HCT116 (cell line): ENCODE measurements at regions of chr13 and their contacts with region 1.

Region 1: DNA sequence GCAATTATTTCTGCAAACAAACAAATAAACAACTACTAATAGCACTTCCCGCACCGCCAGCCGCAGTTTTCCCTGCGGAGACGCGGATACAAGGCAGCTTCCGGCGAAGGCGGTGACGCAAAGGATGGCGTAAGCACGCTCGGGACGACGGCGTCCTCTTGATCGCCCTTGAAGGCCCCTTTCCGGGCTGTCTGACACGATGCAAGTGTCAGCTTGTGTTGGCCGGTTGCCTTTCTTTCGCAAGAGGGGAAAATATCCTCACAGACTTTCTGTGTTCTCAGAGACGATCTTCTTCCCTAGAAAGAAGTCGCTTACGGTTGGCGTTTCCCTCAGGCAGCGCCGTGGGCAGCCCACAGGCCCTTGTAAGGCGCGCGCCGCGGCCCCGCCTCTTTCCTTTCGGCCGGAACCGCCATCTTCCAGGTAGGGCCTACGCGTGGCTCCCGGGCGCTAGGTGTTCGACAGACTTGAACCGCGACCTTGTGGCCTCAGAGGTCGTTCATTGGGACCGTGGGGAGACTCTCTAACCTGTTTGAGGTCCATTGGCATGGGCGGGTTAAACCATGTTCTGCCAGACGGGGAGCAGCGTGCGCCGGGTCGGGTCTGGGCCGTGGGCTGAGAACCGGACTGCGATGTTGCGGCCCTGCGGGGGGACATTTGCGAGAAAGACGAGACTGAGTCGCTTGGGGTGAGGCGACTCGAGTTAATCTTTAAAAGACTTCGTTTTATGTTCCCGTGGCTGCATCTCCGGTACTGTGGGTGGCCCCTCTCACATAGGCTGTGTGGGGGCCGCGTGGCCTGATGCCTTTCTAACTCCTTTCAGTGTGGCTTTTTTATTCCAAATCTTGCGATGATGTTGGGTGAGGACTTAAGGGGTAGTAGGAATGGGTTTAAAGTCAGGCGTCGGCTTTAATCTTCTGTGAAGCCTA is at the start of gene RPL21:
- DNase-seq: peak; percentile 97
- ATAC-seq: peak; percentile 95
- H3K4me3 ChIP-seq: peak within 1 kb of the TSS; percentile 86 to 96
- H3K27ac ChIP-seq: peak within 1 kb of the TSS; percentile 96
- H3K4me1 ChIP-seq: peaks cover 13 to 22% of the 10 kb centered on the region in 2 experiments; a peak in 3 of 4 replicates
- H3K27me3 ChIP-seq: no peaks in the 10 kb centered on the region
- CTCF ChIP-seq: no peak
- POLR2A ChIP-seq: peak; percentile 88
- RAD21 ChIP-seq: peak; percentile 6; the same call in 1 of the 2 replicates
- total RNA-seq, gene RPL21: 915 TPM

Region 2: DNA sequence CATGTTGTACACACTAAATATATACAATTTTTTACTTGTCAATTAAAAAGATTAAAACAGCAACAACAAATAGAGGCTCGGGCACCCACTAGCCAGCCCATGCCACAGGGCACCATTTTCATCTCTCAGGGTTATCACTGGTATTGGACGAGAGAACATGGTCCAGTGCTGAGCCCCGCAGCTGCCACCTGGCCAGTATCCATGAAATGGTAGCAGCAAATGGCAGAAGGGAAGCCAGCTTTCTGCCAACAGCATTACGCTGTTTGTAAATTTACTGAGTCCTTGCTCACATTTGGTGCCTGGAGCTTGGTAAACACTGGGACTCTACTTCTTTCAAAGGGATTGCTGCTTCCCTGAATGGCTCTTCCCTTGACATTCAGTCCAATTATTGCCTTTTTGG is 781.8 kb before region 1 on chr13:
- CTCF ChIA-PET with region 1: no interaction called
- POLR2A ChIA-PET with region 1: no interaction called
- RAD21 ChIA-PET with region 1: no interaction called
- intact Hi-C with region 1: no loop called
- DNase-seq: no peak
- ATAC-seq: no peak
- H3K4me3 ChIP-seq: no peak overlapping the region
- H3K27ac ChIP-seq: no peak overlapping the region
- H3K4me1 ChIP-seq: no peaks in the 10 kb centered on the region
- H3K27me3 ChIP-seq: peaks cover 4% of the 10 kb centered on the region; the same call in 1 of the 2 replicates
- CTCF ChIP-seq: no peak
- POLR2A ChIP-seq: no peak
- RAD21 ChIP-seq: no peak

Region 3: GRCh38 chr13:27043013-27043412 is 208.4 kb before region 1 on chr13:
- CTCF ChIA-PET with region 1: no interaction called
- POLR2A ChIA-PET with region 1: no interaction called
- RAD21 ChIA-PET with region 1: no interaction called
- intact Hi-C with region 1: loop called (anchors 5 kb)
- DNase-seq: peak; percentile 83
- ATAC-seq: peak; percentile 94
- H3K4me3 ChIP-seq: peak overlapping the region in 1 of 2 experiments; percentile 10; a peak in 1 of 4 replicates
- H3K27ac ChIP-seq: peak overlapping the region; percentile 43; the same call in 1 of the 2 replicates
- H3K4me1 ChIP-seq: peaks cover 20 to 31% of the 10 kb centered on the region in 2 experiments
- H3K27me3 ChIP-seq: no peaks in the 10 kb centered on the region
- CTCF ChIP-seq: no peak
- POLR2A ChIP-seq: no peak
- RAD21 ChIP-seq: peak; percentile 34; the same call in 1 of the 2 replicates

Region 4: DNA sequence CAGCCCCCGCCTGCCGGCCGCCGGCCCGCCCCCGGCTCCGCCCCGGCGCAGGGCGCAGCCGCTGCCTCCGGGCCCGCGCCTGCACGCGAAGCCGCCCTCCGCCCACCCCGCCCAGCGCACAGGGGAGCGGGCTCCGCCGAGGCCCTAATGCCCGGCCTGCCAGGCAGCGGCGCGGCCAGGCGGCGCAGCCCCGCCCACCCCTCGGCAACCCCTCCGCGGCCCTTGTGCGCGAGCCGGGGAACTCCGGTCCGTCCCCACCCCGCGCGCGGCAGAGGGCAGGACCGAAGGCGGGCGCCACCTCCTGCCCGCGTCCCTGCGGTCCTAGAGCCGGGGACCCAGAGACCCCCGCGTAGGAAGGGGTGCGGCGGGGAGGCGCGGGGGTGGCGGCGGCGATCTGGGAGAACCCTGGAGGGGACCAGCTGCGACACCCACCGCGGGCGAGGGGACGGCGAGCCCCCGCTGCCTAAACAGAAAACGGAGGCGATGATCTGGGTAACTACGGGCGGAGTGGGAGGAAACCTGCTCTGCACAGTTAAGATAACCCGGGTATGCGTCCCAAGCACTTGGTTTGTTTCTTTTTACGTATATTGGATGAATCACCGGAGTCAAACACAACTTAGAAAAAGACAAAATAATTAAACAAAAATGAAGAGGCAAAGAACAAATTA is 79.5 kb before region 1 on chr13:
- CTCF ChIA-PET with region 1: no interaction called
- POLR2A ChIA-PET with region 1: no interaction called
- RAD21 ChIA-PET with region 1: no interaction called
- intact Hi-C with region 1: loop called (anchors 2 kb)
- DNase-seq: peak; percentile 72
- ATAC-seq: peak; percentile 92
- H3K4me3 ChIP-seq: peak overlapping the region; percentile 52 to 86
- H3K27ac ChIP-seq: peak overlapping the region; percentile 60
- H3K4me1 ChIP-seq: peaks cover 15 to 36% of the 10 kb centered on the region in 2 experiments; a peak in 3 of 4 replicates
- H3K27me3 ChIP-seq: no peaks in the 10 kb centered on the region
- CTCF ChIP-seq: no peak
- POLR2A ChIP-seq: no peak
- RAD21 ChIP-seq: 0 out of 2 replicates have a peak, but pooled peaks have one; percentile 16

Region 5: GRCh38 chr13:27177852-27178251 is 73.6 kb before region 1 on chr13:
- CTCF ChIA-PET with region 1: no interaction called
- POLR2A ChIA-PET with region 1: no interaction called
- RAD21 ChIA-PET with region 1: no interaction called
- intact Hi-C with region 1: loop called (anchors 2 kb)
- DNase-seq: no peak
- ATAC-seq: peak; percentile 83
- H3K4me3 ChIP-seq: no peak overlapping the region
- H3K27ac ChIP-seq: no peak overlapping the region
- H3K4me1 ChIP-seq: peaks cover 11 to 14% of the 10 kb centered on the region in 2 experiments; a peak in 3 of 4 replicates
- H3K27me3 ChIP-seq: no peaks in the 10 kb centered on the region
- CTCF ChIP-seq: peak; percentile 5 to 40 (median 33); a peak in 3 of 6 replicates
- POLR2A ChIP-seq: no peak
- RAD21 ChIP-seq: peak; percentile 52

Region 6: GRCh38 chr13:27194895-27195764 is 56.3 kb before region 1 on chr13:
- CTCF ChIA-PET with region 1: no interaction called
- POLR2A ChIA-PET with region 1: interaction called, 10 read pairs
- RAD21 ChIA-PET with region 1: no interaction called
- intact Hi-C with region 1: no loop called
- DNase-seq: peak; percentile 96
- ATAC-seq: peak; percentile 98
- H3K4me3 ChIP-seq: peak overlapping the region; percentile 20 to 35
- H3K27ac ChIP-seq: peak overlapping the region; percentile 72
- H3K4me1 ChIP-seq: peaks cover 24 to 45% of the 10 kb centered on the region in 2 experiments
- H3K27me3 ChIP-seq: no peaks in the 10 kb centered on the region
- CTCF ChIP-seq: 0 out of 6 replicates have a peak, but pooled peaks of 1 of the 3 experiments have one; percentile 1
- POLR2A ChIP-seq: no peak
- RAD21 ChIP-seq: peak; percentile 34; the same call in 1 of the 2 replicates

Region 7: GRCh38 chr13:27339299-27339698 is 87.9 kb after region 1 on chr13:
- CTCF ChIA-PET with region 1: no interaction called
- POLR2A ChIA-PET with region 1: no interaction called
- RAD21 ChIA-PET with region 1: no interaction called
- intact Hi-C with region 1: loop called (anchors 2 kb)
- DNase-seq: peak; percentile 78
- ATAC-seq: peak; percentile 96
- H3K4me3 ChIP-seq: peak overlapping the region; percentile 12 to 27; a peak in 2 of 4 replicates
- H3K27ac ChIP-seq: no peak overlapping the region
- H3K4me1 ChIP-seq: 0 out of 4 replicates have a peak, but pooled peaks cover 0 to 13% of the 10 kb centered on the region in 2 experiments
- H3K27me3 ChIP-seq: no peaks in the 10 kb centered on the region
- CTCF ChIP-seq: peak; percentile 45 to 90 (median 63); a peak in 5 of 6 replicates
- POLR2A ChIP-seq: no peak
- RAD21 ChIP-seq: peak; percentile 46